Caco-2 (cell line): ENCODE measurements at regions of chr1 and their contacts with region 1.

Region 1: GRCh38 chr1:23959041-23959460 is 577 bp upstream of the PNRC2 start:
- DNase-seq: peak; percentile 86 to 93
- H3K4me3 ChIP-seq: peak overlapping the region; percentile 69
- H3K4me3 Mint-ChIP-seq: peak overlapping the region; percentile 94
- H3K27ac Mint-ChIP-seq: peak overlapping the region; percentile 99
- H3K4me1 ChIP-seq: peaks cover 7% of the 10 kb centered on the region; the same call in 1 of the 2 replicates
- H3K4me1 Mint-ChIP-seq: no peaks in the 10 kb centered on the region
- H3K27me3 ChIP-seq: no peaks in the 10 kb centered on the region
- H3K27me3 Mint-ChIP-seq: no peaks in the 10 kb centered on the region
- CTCF ChIP-seq: peak in 1 of 2 experiments; percentile 45

Region 2: GRCh38 chr1:23979878-23980724 is 21.1 kb after region 1 on chr1 and contains the start of gene SRSF10:
- CTCF ChIA-PET with region 1: no interaction called
- POLR2A ChIA-PET with region 1: interaction called, 7 read pairs
- intact Hi-C with region 1: loop called (anchors 1 kb)
- DNase-seq: peak; percentile 95 to 98
- H3K4me3 ChIP-seq: peak within 1 kb of the TSS; percentile 80
- H3K4me3 Mint-ChIP-seq: peak within 1 kb of the TSS; percentile 93
- H3K27ac Mint-ChIP-seq: peak within 1 kb of the TSS; percentile 86
- H3K4me1 ChIP-seq: peaks cover 30% of the 10 kb centered on the region
- H3K4me1 Mint-ChIP-seq: peaks cover 7% of the 10 kb centered on the region
- H3K27me3 ChIP-seq: no peaks in the 10 kb centered on the region
- H3K27me3 Mint-ChIP-seq: no peaks in the 10 kb centered on the region
- CTCF ChIP-seq: peak in 1 of 2 experiments; percentile 14
- total RNA-seq, gene SRSF10: 128 and 133 TPM in 2 replicates

Region 3: DNA sequence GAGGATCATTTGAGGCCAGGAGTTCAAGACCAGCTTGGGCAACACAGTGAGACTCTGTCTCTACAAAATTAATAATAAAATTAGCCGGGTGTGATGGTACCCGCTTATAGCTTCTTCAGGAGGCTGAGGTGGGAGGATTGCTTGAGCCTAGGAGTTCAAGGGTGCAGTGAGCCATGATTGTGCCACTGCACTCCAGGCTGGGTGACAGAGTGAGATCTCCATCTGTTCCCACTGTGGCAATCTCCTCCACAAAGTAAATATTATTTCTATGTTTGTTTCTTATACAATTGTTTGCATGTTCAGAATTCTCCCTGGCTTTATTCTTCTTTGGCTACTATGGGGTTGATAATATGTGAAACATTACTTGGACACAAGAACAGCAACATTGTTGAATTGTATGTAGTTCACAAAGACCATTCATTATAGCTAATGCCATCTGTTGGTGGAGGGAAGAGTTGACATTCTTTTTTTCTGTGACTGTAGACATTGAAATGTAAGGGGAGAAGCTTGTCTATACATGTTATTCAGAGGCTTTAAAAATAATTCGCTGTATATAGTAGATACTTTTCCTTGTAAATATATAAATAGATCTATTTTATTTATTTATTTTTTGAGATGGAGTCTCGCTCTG is 68.9 kb after region 1 on chr1:
- CTCF ChIA-PET with region 1: interaction called, 4 read pairs
- POLR2A ChIA-PET with region 1: interaction called, 3 read pairs
- intact Hi-C with region 1: loop called (anchors 2 kb)
- DNase-seq: peak in 1 of 2 experiments; percentile 30
- H3K4me3 ChIP-seq: no peak overlapping the region
- H3K4me3 Mint-ChIP-seq: no peak overlapping the region
- H3K27ac Mint-ChIP-seq: no peak overlapping the region
- H3K4me1 ChIP-seq: peaks cover 7% of the 10 kb centered on the region
- H3K4me1 Mint-ChIP-seq: no peaks in the 10 kb centered on the region
- H3K27me3 ChIP-seq: no peaks in the 10 kb centered on the region
- H3K27me3 Mint-ChIP-seq: no peaks in the 10 kb centered on the region
- CTCF ChIP-seq: peak; percentile 32 to 55

Region 4: GRCh38 chr1:24111996-24112779 is 153.1 kb after region 1 on chr1 and contains the start of gene MYOM3:
- CTCF ChIA-PET with region 1: no interaction called
- POLR2A ChIA-PET with region 1: no interaction called
- intact Hi-C with region 1: loop called (anchors 2 kb)
- DNase-seq: peak; percentile 69 to 74
- H3K4me3 ChIP-seq: no peak within 1 kb of the TSS
- H3K4me3 Mint-ChIP-seq: no peak within 1 kb of the TSS
- H3K27ac Mint-ChIP-seq: no peak within 1 kb of the TSS
- H3K4me1 ChIP-seq: 0 out of 2 replicates have a peak, but pooled peaks cover 5% of the 10 kb centered on the region
- H3K4me1 Mint-ChIP-seq: no peaks in the 10 kb centered on the region
- H3K27me3 ChIP-seq: no peaks in the 10 kb centered on the region
- H3K27me3 Mint-ChIP-seq: no peaks in the 10 kb centered on the region
- CTCF ChIP-seq: peak in 1 of 2 experiments; percentile 78
- total RNA-seq, gene MYOM3: not detected in 2 replicates

Region 5: DNA sequence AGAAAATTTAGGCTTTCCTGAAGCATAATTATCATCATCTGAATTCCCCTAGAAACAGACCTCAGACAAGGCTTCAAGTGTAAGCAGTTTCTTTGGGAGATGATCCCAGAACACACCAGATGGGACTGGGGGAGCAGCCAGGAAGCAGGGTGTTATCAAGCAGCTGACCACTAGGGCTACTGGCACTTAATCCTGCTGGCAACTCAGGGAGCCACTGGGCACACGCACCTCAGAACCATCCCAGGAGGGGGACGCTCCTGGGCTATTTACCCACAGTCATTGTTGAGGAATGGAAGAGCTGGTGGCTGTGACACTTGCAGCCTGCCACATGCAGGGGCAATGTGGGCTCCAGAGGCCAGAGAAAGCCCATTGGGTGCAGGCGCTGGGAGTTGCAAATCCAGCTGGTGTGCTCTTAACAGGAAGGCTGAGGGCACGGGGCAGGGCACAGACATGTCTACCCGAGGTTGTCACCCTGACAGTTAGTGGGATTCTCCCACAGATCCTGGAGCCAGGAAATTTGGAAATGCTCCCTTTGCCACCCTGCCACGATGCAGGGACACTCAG is 198.9 kb after region 1 on chr1:
- CTCF ChIA-PET with region 1: no interaction called
- POLR2A ChIA-PET with region 1: no interaction called
- intact Hi-C with region 1: no loop called
- DNase-seq: no peak
- H3K4me3 ChIP-seq: no peak overlapping the region
- H3K4me3 Mint-ChIP-seq: no peak overlapping the region
- H3K27ac Mint-ChIP-seq: no peak overlapping the region
- H3K4me1 ChIP-seq: no peaks in the 10 kb centered on the region
- H3K4me1 Mint-ChIP-seq: no peaks in the 10 kb centered on the region
- H3K27me3 ChIP-seq: no peaks in the 10 kb centered on the region
- H3K27me3 Mint-ChIP-seq: no peaks in the 10 kb centered on the region
- CTCF ChIP-seq: peak in 1 of 2 experiments; percentile 20